CD4-positive, alpha-beta T cell (primary cell): ENCODE measurements at regions of chr1 and their contacts with region 1.

Region 1: DNA sequence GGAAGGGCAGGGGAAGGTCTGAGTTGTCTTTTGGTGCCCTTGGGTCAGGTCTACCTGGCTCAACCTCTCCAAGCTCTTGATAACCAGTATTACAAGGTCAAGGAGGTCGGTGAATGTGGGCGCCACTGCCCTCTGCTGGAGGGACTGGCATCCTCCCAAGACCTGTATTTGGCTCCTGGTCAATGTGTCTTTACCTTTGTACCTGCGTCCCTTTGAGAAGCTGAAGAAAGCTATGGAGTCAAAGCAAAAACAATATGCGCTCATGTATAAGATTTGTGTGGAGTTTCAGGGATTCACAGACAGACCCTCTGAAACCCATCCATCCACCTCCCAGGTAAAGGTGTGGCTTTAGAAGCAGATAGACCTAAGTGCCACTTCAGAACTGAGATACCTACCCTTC is 61.8 kb upstream of the NBL1 start:
- DNase-seq: peak; percentile 59 to 88 (median 76)
- ATAC-seq: peak; percentile 77
- H3K4me3 ChIP-seq: no peak overlapping the region
- H3K4me3 Mint-ChIP-seq: no peak overlapping the region
- H3K27ac ChIP-seq: no peak overlapping the region
- H3K27ac Mint-ChIP-seq: no peak overlapping the region
- H3K4me1 ChIP-seq: peaks cover 11% of the 10 kb centered on the region
- H3K4me1 Mint-ChIP-seq: peaks cover 9% of the 10 kb centered on the region
- H3K27me3 ChIP-seq: no peaks in the 10 kb centered on the region
- H3K27me3 Mint-ChIP-seq: peaks cover 4% of the 10 kb centered on the region
- CTCF ChIP-seq: peak; percentile 91

Region 2: DNA sequence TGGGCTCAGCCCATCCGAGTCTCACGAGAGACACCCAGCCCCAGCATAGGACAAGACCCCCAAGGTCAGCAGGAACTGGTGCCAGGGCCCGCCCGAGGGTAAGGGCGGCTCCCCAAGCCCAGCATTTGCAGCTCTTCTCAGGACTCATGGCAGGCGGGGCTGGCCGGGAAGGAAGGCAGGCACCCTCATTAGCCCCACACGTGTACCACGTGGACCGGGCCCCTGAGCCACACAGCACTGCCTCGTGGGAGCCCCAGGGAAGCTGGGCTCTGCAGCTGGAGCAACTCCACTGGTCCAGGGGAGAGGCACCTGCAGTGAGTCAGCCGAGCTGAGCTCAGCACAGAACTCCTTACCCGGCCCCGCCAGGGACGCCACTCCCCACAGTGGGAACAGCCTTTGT is 528.1 kb before region 1 on chr1:
- CTCF ChIA-PET with region 1: no interaction called
- POLR2A ChIA-PET with region 1: no interaction called
- intact Hi-C with region 1: no loop called
- DNase-seq: no peak
- ATAC-seq: no peak
- H3K4me3 ChIP-seq: no peak overlapping the region
- H3K4me3 Mint-ChIP-seq: no peak overlapping the region
- H3K27ac ChIP-seq: no peak overlapping the region
- H3K27ac Mint-ChIP-seq: no peak overlapping the region
- H3K4me1 ChIP-seq: peaks cover 10% of the 10 kb centered on the region
- H3K4me1 Mint-ChIP-seq: peaks cover 16% of the 10 kb centered on the region
- H3K27me3 ChIP-seq: peaks cover 21 to 24% of the 10 kb centered on the region in 2 experiments
- H3K27me3 Mint-ChIP-seq: peaks cover 33% of the 10 kb centered on the region
- CTCF ChIP-seq: no peak

Region 3: DNA sequence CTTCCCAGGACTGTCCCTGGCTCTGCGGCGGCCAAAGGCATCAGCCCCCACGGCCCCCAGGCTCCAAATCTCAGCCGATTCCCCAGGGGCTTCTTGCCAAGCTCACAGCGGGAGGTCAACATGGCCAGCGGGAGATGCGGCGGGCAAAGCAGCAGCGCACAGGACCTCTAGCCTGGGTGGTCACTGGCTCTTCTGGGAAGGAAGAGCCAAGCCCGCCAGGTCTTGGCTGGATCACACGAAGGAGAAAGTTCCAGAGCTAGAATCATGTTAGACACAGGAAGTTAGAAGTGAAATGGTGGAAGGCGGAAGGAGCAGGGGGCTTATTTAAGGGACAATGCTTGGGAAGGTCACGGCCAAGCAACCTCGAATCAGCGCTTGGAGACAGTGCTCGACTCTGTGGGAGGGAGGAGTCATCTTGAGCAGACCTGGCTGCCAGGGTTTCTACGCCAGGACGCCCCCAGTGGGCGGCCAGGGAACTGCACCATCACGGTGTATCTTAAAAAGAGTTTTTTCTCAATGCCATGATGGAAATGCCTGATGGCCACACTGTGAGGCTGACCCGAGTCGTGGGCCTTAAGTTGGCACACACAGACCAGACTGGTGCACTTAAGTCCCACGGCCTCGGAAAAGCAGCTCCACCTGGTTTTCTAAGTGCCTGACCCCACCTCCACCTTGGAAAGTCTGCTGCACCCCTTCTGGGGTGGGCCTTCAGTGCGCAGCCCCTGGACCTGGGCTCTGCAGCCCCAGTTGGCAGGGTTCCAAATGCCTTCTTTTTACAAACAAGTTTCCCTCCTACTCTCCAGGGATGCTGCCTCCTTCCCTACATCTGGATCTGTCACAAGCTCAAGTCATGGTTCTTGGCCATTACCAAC is 240.9 kb before region 1 on chr1:
- CTCF ChIA-PET with region 1: interaction called, 3 read pairs
- POLR2A ChIA-PET with region 1: no interaction called
- intact Hi-C with region 1: loop called (anchors 1 to 2 kb)
- DNase-seq: peak; percentile 58 to 85 (median 71)
- ATAC-seq: peak; percentile 89
- H3K4me3 ChIP-seq: no peak overlapping the region
- H3K4me3 Mint-ChIP-seq: no peak overlapping the region
- H3K27ac ChIP-seq: no peak overlapping the region
- H3K27ac Mint-ChIP-seq: peak overlapping the region; percentile 37
- H3K4me1 ChIP-seq: peaks cover 8% of the 10 kb centered on the region
- H3K4me1 Mint-ChIP-seq: peaks cover 6% of the 10 kb centered on the region
- H3K27me3 ChIP-seq: no peaks in the 10 kb centered on the region
- H3K27me3 Mint-ChIP-seq: no peaks in the 10 kb centered on the region
- CTCF ChIP-seq: peak; percentile 87

Region 4: DNA sequence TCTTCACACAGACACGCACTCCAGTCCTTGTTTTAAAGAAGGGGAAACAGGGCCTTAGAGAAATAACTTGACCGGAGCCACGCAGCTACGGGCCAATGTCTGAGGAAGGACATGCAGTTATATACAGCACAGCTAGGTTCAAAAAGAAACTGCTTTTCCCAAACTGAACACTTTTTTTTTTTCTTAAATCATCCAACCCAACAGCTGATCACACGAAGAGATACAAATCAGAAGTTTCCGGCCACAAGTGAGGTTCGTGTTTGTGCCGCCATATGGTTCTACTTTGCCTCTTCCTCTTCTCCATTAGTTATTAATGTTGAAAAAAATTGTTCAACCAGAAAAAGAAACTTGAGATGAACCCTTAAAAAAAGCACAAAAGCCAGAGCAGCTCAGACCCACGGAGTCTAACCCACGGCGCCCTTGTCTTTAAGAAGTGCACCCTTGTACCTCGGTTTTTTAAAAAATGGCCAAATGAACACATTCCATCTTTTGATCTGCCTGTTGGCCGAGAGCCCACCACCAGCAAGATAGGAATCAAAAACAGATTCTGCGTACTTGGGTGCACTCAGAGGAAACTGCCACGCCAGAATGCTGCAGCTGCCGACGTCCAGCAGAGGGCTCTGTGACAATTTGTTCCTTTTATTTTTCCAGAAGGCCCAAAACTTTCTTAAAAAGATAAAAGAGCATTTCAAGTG is 191.3 kb before region 1 on chr1:
- CTCF ChIA-PET with region 1: interaction called, 19 read pairs
- POLR2A ChIA-PET with region 1: interaction called, 7 read pairs
- intact Hi-C with region 1: loop called (anchors 1 kb)
- DNase-seq: peak; percentile 31 to 91 (median 62)
- ATAC-seq: peak; percentile 76
- H3K4me3 ChIP-seq: peak overlapping the region; percentile 51
- H3K4me3 Mint-ChIP-seq: peak overlapping the region; percentile 92
- H3K27ac ChIP-seq: peak overlapping the region; percentile 46 to 62
- H3K27ac Mint-ChIP-seq: peak overlapping the region; percentile 94
- H3K4me1 ChIP-seq: peaks cover 92% of the 10 kb centered on the region
- H3K4me1 Mint-ChIP-seq: peaks cover 86% of the 10 kb centered on the region
- H3K27me3 ChIP-seq: no peaks in the 10 kb centered on the region
- H3K27me3 Mint-ChIP-seq: no peaks in the 10 kb centered on the region
- CTCF ChIP-seq: peak; percentile 90

Region 5: GRCh38 chr1:19439464-19440171 is 142.7 kb before region 1 on chr1:
- CTCF ChIA-PET with region 1: interaction called, 16 read pairs
- POLR2A ChIA-PET with region 1: interaction called, 3 read pairs
- intact Hi-C with region 1: loop called (anchors 1 kb)
- DNase-seq: peak; percentile 21 to 71 (median 47)
- ATAC-seq: peak; percentile 72
- H3K4me3 ChIP-seq: no peak overlapping the region
- H3K4me3 Mint-ChIP-seq: peak overlapping the region; percentile 52
- H3K27ac ChIP-seq: peak overlapping the region in 1 of 2 donors; percentile 26
- H3K27ac Mint-ChIP-seq: peak overlapping the region; percentile 76
- H3K4me1 ChIP-seq: peaks cover 87% of the 10 kb centered on the region
- H3K4me1 Mint-ChIP-seq: peaks cover 94% of the 10 kb centered on the region
- H3K27me3 ChIP-seq: no peaks in the 10 kb centered on the region
- H3K27me3 Mint-ChIP-seq: no peaks in the 10 kb centered on the region
- CTCF ChIP-seq: peak; percentile 54

Region 6: DNA sequence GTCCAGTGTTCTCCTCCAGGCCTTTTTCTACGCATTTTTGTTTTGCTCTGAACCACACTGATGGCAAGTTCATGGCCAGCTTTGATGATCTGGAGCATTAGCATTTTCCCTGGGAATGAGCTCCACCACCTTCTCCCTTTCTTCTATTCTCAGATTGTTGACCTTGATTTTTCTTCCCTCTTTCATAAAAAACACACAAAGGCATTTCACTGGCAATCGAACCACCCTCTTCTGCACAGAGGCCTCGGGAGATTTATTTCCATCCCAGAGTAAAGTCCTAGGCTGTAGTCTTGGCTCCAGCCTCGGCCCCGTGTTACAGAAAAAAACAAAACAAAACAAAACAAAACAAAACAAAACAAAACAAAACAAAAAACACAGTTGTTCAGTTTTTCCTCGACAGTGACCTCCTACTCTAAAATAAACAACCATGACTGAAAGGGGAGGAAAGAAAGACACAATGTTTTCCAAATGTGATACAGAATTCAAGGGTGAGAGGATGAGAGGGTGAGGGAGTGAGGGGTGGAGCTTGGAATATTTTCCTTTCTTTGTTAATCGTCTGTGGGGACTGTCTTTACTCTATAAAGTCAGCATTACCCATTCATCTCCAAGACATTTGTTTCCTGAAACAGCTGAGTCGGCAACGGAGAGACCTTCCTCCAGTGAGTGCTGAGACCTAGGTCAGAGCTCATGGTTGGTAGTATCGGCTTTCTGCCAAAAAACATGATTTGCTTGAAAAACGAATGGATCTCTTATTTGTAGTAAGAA is 262.6 kb after region 1 on chr1:
- CTCF ChIA-PET with region 1: no interaction called
- POLR2A ChIA-PET with region 1: no interaction called
- intact Hi-C with region 1: no loop called
- DNase-seq: no peak
- ATAC-seq: no peak
- H3K4me3 ChIP-seq: no peak overlapping the region
- H3K4me3 Mint-ChIP-seq: no peak overlapping the region
- H3K27ac ChIP-seq: no peak overlapping the region
- H3K27ac Mint-ChIP-seq: no peak overlapping the region
- H3K4me1 ChIP-seq: no peaks in the 10 kb centered on the region
- H3K4me1 Mint-ChIP-seq: no peaks in the 10 kb centered on the region
- H3K27me3 ChIP-seq: peaks cover 9 to 10% of the 10 kb centered on the region in 2 experiments
- H3K27me3 Mint-ChIP-seq: peaks cover 23% of the 10 kb centered on the region
- CTCF ChIP-seq: no peak